Posterior vena cava (tissue), 2 donors: ENCODE measurements at regions of chr5 and their contacts with region 1.

Region 1: DNA sequence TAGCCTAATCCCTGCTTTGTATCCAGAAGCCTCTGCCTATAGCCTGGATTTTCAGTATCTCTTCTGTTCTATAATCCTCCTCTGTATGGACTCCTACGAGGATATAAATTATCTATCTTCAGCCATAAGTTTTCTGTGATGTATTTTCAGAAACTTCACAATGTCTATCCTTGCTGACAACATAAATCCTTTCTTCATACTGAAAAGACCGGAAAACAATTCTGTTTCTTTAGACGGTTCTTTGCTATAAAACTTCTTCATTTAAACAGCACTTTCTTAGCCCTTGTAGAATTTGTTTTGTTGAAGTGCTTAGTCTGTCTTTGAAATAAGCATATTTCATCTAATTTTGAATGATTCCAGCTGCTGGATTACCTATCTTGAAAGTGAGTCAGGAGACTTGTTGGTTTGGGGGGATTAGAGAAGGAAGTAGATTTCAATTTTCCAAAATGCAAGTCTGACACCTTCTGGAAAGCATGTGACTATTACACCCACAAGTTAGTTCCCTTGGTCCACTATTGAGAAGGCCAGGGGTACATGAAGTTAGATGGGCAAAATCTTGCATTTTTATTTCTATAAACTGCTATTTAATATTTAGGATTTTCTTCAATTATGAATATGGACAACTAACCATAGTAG is 96.3 kb upstream of the RANBP3L start:
- DNase-seq: no peak

Region 2: DNA sequence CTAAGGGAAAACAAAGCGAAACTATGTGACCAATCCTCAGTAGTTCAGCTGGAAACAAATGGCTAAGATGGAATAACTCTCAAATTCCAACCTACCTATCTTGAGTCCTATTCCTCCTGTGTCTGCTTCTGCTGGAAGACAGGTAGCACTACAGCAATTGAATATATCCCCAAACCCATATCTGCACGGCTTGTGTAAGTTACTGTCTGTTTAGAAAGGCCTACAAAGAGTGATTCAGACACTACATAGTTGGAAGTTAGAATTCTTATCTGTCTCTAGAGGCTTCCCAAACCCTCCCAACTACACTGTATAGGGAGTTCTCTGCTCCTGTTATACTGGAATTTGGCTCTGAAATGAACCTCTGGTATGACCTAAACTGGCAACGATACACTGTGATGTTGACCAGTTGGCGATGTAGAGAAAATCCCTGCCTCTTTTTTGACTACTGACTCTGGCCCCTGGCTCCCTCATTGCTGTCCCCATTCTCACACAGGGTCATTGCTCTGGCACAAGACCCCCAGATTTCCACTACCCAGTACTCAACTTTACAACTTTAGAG is 133.7 kb before region 1 on chr5:
- intact Hi-C with region 1: loop called in 1 of 2 experiments (anchors 10 kb)
- DNase-seq: no peak